ENCODE measurements at regions of chr17 and their contacts with region 1.

Region 1: DNA sequence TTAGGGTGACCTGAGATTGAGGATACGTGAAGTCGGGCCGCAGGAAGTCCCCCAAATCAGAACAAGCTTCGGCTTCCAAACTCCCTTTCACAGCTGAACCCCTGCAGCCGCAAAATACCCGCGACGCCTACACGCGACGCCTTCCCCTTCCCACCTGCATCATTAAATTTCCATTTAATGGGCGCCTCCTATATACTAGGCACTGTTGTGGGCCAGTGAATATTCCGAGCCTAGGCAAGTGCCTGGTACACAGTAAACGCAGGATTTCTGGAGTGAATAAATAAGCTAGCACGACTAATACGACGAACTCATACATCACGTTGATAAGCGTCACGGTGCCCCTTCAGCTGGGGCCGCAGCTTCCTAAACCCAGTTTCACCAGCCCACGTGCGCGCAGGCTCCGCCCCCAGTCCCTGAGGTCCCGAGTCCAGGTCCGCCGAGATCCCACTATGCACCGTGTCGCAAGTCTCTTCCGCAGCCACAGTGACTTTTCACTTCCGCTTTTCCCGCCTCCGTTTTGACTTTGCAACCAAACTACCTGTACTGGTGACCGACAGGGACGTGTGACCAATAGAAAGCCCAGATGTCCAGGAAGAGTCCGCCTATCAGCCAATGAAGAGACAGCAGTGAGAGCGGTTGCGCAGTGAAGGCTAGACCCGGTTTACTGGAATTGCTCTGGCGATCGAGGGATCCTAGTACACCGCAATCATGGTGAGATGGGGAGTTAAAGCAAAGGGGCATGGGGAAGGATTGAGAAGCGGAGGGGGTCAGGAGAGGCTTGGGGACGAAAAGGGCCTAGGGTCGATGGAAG is at the start of gene PSMB3:
- DNase-seq: peak; percentile 90 to 100 (median 95)
- ATAC-seq: peak; percentile 87
- H3K4me3 ChIP-seq: peak within 1 kb of the TSS; percentile 88 to 99
- H3K4me3 Mint-ChIP-seq: peak within 1 kb of the TSS; percentile 96
- H3K27ac ChIP-seq: peak within 1 kb of the TSS; percentile 70 to 85
- H3K27ac Mint-ChIP-seq: peak within 1 kb of the TSS; percentile 97
- H3K4me1 ChIP-seq: peaks cover 53% of the 10 kb centered on the region
- H3K4me1 Mint-ChIP-seq: peaks cover 54% of the 10 kb centered on the region
- H3K27me3 ChIP-seq: peaks cover 21 to 31% of the 10 kb centered on the region in 2 experiments
- H3K27me3 Mint-ChIP-seq: peaks cover 19% of the 10 kb centered on the region
- CTCF ChIP-seq: no peak
- total RNA-seq, gene PSMB3: 53.6 to 64.2 TPM

Region 2: DNA sequence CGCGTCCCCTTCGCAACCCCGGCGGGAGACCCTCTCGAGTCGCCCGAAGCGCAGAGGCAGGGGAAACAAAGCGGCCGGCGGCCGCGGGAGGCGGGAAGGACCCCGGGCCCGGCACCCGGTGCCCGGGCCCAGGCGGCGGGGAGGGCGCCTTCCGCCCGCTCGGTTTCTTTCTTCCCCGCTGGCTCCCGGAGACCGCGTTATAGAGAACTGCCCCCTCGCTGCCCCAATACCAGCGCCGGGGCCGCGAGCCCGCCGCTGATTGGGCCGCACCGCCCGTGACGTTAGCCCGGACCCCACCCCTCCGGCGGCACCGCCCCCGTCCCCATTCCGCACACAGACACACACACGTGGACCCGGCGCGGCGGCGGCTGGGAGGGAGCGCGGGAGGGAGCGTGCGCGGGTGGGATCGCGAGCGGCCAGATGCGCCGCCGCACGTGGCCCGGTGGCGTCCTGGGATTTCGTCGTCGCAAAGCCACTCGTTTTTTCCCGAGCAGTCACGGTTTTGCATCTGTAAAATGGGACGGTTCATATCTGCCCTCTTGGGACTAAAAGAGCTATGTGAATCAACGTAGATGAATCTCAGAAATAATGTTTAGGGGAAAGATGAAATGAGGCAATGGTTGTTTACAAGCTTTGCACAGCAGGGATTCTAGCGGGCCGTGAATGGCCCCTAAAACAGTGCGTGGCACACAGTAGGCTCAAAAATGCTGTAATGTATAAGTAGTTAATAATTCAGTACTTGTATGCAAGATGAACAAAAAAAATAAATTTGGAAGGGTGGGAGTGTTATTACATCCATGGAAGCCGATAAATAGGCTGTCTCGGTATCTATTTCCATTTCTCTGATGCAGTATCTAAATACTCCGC is 77.3 kb before region 1 on chr17 and contains the start of gene EPOP:
- CTCF ChIA-PET with region 1: interaction called, 8 read pairs
- POLR2A ChIA-PET with region 1: no interaction called
- intact Hi-C with region 1: loop called (anchors 5 kb)
- DNase-seq: peak; percentile 51 to 91 (median 80)
- ATAC-seq: peak; percentile 80
- H3K4me3 ChIP-seq: peak within 1 kb of the TSS; percentile 34 to 58
- H3K4me3 Mint-ChIP-seq: peak within 1 kb of the TSS; percentile 75
- H3K27ac ChIP-seq: no peak within 1 kb of the TSS
- H3K27ac Mint-ChIP-seq: no peak within 1 kb of the TSS
- H3K4me1 ChIP-seq: peaks cover 17% of the 10 kb centered on the region
- H3K4me1 Mint-ChIP-seq: peaks cover 26% of the 10 kb centered on the region
- H3K27me3 ChIP-seq: peaks cover 4 to 14% of the 10 kb centered on the region in 2 experiments
- H3K27me3 Mint-ChIP-seq: peaks cover 28% of the 10 kb centered on the region
- CTCF ChIP-seq: no peak
- total RNA-seq, gene EPOP: 0.89 to 0.98 TPM

Region 3: DNA sequence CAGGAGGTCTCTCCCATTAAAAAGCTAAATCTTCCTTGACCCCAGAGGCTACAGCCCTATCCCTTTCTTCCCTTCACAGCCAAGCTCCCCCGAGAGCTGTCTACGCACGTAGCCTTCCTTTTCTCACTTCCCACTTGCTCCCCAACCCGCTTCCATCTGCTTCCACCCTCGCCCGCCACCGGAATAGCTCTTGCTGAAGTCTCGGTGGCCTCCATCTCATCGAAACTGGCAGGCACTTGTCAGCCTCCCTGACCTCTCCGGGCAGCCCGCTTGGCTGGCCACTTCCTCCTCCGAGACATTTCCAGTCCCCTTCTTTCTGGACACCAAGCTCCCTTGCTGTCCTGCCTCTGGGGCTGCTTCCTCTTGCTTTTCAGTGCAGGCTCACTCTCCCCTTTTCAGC is 66.8 kb before region 1 on chr17:
- CTCF ChIA-PET with region 1: no interaction called
- POLR2A ChIA-PET with region 1: no interaction called
- intact Hi-C with region 1: no loop called
- DNase-seq: no peak
- ATAC-seq: no peak
- H3K4me3 ChIP-seq: no peak overlapping the region
- H3K4me3 Mint-ChIP-seq: no peak overlapping the region
- H3K27ac ChIP-seq: no peak overlapping the region
- H3K27ac Mint-ChIP-seq: no peak overlapping the region
- H3K4me1 ChIP-seq: no peaks in the 10 kb centered on the region
- H3K4me1 Mint-ChIP-seq: no peaks in the 10 kb centered on the region
- H3K27me3 ChIP-seq: no peaks in the 10 kb centered on the region
- H3K27me3 Mint-ChIP-seq: no peaks in the 10 kb centered on the region
- CTCF ChIP-seq: no peak

Region 4: GRCh38 chr17:38729886-38730525 is 22.3 kb before region 1 on chr17 and contains the start of gene CISD3:
- CTCF ChIA-PET with region 1: interaction called, 24 read pairs
- POLR2A ChIA-PET with region 1: interaction called, 12 read pairs
- intact Hi-C with region 1: loop called (anchors 1 kb)
- DNase-seq: peak; percentile 61 to 95 (median 83)
- ATAC-seq: peak; percentile 74
- H3K4me3 ChIP-seq: peak within 1 kb of the TSS; percentile 74 to 80
- H3K4me3 Mint-ChIP-seq: peak within 1 kb of the TSS; percentile 93
- H3K27ac ChIP-seq: peak within 1 kb of the TSS; percentile 53 to 94
- H3K27ac Mint-ChIP-seq: peak within 1 kb of the TSS; percentile 97
- H3K4me1 ChIP-seq: peaks cover 74% of the 10 kb centered on the region
- H3K4me1 Mint-ChIP-seq: peaks cover 80% of the 10 kb centered on the region
- H3K27me3 ChIP-seq: no peaks in the 10 kb centered on the region
- H3K27me3 Mint-ChIP-seq: no peaks in the 10 kb centered on the region
- CTCF ChIP-seq: peak; percentile 61
- total RNA-seq, gene CISD3: 3.5 to 5.7 TPM

Region 5: DNA sequence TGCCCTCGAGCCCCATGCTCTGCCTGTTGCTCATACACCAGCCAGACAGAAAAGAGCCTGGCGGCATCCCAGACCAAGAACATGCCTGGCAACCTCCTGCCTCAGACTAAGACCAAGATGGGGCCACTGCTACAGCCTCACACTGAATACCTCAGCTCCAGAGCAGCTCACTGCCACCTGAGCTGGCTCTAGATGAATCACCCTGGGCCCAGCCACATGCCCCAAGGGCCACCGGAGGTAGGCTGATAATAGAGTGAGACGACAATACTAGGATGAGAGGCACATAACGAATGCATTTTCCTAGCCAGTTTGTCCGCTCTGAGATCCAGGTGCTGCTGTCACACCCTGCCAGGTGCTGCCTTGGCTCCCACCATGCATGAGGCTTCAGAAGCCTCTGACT is 34.0 kb after region 1 on chr17:
- CTCF ChIA-PET with region 1: no interaction called
- POLR2A ChIA-PET with region 1: no interaction called
- intact Hi-C with region 1: no loop called
- DNase-seq: no peak
- ATAC-seq: no peak
- H3K4me3 ChIP-seq: no peak overlapping the region
- H3K4me3 Mint-ChIP-seq: no peak overlapping the region
- H3K27ac ChIP-seq: no peak overlapping the region
- H3K27ac Mint-ChIP-seq: no peak overlapping the region
- H3K4me1 ChIP-seq: no peaks in the 10 kb centered on the region
- H3K4me1 Mint-ChIP-seq: peaks cover 9% of the 10 kb centered on the region
- H3K27me3 ChIP-seq: no peaks in the 10 kb centered on the region
- H3K27me3 Mint-ChIP-seq: no peaks in the 10 kb centered on the region
- CTCF ChIP-seq: no peak

Region 6: GRCh38 chr17:38824899-38825761 is 72.8 kb after region 1 on chr17 and contains the start of gene CWC25:
- CTCF ChIA-PET with region 1: no interaction called
- POLR2A ChIA-PET with region 1: interaction called, 3 read pairs
- intact Hi-C with region 1: loop called (anchors 1 kb)
- DNase-seq: peak; percentile 92 to 100 (median 97)
- ATAC-seq: peak; percentile 80
- H3K4me3 ChIP-seq: peak within 1 kb of the TSS; percentile 65 to 88
- H3K4me3 Mint-ChIP-seq: peak within 1 kb of the TSS; percentile 99
- H3K27ac ChIP-seq: peak within 1 kb of the TSS; percentile 97 to 98
- H3K27ac Mint-ChIP-seq: peak within 1 kb of the TSS; percentile 100
- H3K4me1 ChIP-seq: peaks cover 23% of the 10 kb centered on the region
- H3K4me1 Mint-ChIP-seq: peaks cover 35% of the 10 kb centered on the region
- H3K27me3 ChIP-seq: no peaks in the 10 kb centered on the region
- H3K27me3 Mint-ChIP-seq: no peaks in the 10 kb centered on the region
- CTCF ChIP-seq: no peak
- total RNA-seq, gene CWC25: 80.3 to 87.5 TPM

Region 7: GRCh38 chr17:38898812-38899348 is 146.6 kb after region 1 on chr17:
- CTCF ChIA-PET with region 1: no interaction called
- POLR2A ChIA-PET with region 1: no interaction called
- intact Hi-C with region 1: loop called in 1 of 2 experiments (anchors 2 kb)
- DNase-seq: peak; percentile 59 to 94 (median 88)
- ATAC-seq: peak; percentile 81
- H3K4me3 ChIP-seq: peak overlapping the region; percentile 25 to 49
- H3K4me3 Mint-ChIP-seq: peak overlapping the region; percentile 77
- H3K27ac ChIP-seq: peak overlapping the region; percentile 56 to 94
- H3K27ac Mint-ChIP-seq: peak overlapping the region; percentile 95
- H3K4me1 ChIP-seq: peaks cover 78% of the 10 kb centered on the region
- H3K4me1 Mint-ChIP-seq: peaks cover 73% of the 10 kb centered on the region
- H3K27me3 ChIP-seq: no peaks in the 10 kb centered on the region
- H3K27me3 Mint-ChIP-seq: no peaks in the 10 kb centered on the region
- CTCF ChIP-seq: no peak

Measured in CD8-positive, alpha-beta T cell (primary cell).